ENCODE measurements at regions of chr4 and their contacts with region 1.

Region 1: DNA sequence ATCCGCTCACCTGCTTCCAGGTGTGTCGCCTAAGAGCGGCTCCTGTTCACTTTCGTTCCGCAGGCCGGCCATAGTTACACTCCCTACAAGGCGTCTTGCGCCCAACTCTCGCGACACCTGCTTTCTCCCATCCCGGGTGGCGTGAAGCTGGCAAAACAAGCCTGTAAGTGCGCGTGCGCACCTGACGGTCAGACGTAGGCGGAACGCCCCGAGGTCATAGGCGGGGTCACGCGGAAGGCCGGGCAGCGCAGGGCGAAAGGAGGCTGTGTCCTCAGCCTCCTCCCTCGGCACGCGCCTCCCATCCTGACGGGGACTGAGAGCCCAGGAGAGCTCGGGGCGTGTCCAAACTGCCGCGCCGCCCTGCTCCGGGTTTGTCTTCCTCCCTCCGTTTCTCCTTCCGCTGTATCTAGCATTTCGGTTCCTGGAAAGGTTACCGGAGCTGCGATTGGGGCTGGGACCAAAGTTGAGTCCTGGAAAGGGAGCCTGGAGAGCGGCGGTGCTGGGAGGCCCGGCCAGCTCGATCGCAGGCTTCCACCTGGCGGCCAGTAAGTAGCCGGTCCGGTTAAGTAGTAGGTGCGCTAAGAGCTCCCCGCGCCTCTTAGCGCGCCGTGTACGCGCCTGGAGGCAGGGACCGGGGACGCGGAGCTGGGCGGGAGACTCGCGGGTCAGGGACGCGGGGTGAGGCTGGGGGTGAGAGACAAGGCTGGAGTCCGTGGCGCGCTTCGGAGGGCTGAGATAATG is at the starts of genes ABHD18 and MFSD8:
- DNase-seq: peak; percentile 99
- H3K4me3 ChIP-seq: peak within 1 kb of the TSS; percentile 66
- H3K4me3 Mint-ChIP-seq: peak within 1 kb of the TSS; percentile 97
- H3K27ac Mint-ChIP-seq: peak within 1 kb of the TSS; percentile 97
- H3K4me1 ChIP-seq: peaks cover 4% of the 10 kb centered on the region; the same call in 1 of the 2 replicates
- H3K4me1 Mint-ChIP-seq: no peaks in the 10 kb centered on the region
- H3K27me3 ChIP-seq: no peaks in the 10 kb centered on the region
- H3K27me3 Mint-ChIP-seq: no peaks in the 10 kb centered on the region
- CTCF ChIP-seq: peak; percentile 34 to 44
- total RNA-seq, gene ABHD18: 14.9 and 15.1 TPM in 2 replicates
- total RNA-seq, gene MFSD8: 24.3 and 27.9 TPM in 2 replicates

Region 2: GRCh38 chr4:127417886-127418535 is 547.2 kb before region 1 on chr4:
- CTCF ChIA-PET with region 1: no interaction called
- POLR2A ChIA-PET with region 1: no interaction called
- intact Hi-C with region 1: no loop called
- DNase-seq: no peak
- H3K4me3 ChIP-seq: no peak overlapping the region
- H3K4me3 Mint-ChIP-seq: no peak overlapping the region
- H3K27ac Mint-ChIP-seq: no peak overlapping the region
- H3K4me1 ChIP-seq: no peaks in the 10 kb centered on the region
- H3K4me1 Mint-ChIP-seq: no peaks in the 10 kb centered on the region
- H3K27me3 ChIP-seq: no peaks in the 10 kb centered on the region
- H3K27me3 Mint-ChIP-seq: peaks cover 4% of the 10 kb centered on the region
- CTCF ChIP-seq: no peak

Region 3: GRCh38 chr4:127782274-127783025 is 182.8 kb before region 1 on chr4 and contains the start of gene HSPA4L:
- CTCF ChIA-PET with region 1: interaction called, 3 read pairs
- POLR2A ChIA-PET with region 1: interaction called, 7 read pairs
- intact Hi-C with region 1: loop called (anchors 2 kb)
- DNase-seq: peak; percentile 36 to 37
- H3K4me3 ChIP-seq: peak within 1 kb of the TSS; percentile 59
- H3K4me3 Mint-ChIP-seq: peak within 1 kb of the TSS; percentile 97
- H3K27ac Mint-ChIP-seq: peak within 1 kb of the TSS; percentile 90
- H3K4me1 ChIP-seq: peaks cover 13% of the 10 kb centered on the region; the same call in 1 of the 2 replicates
- H3K4me1 Mint-ChIP-seq: peaks cover 7% of the 10 kb centered on the region
- H3K27me3 ChIP-seq: no peaks in the 10 kb centered on the region
- H3K27me3 Mint-ChIP-seq: peaks cover 3% of the 10 kb centered on the region
- CTCF ChIP-seq: peak in 1 of 2 experiments; percentile 23
- total RNA-seq, gene HSPA4L: 3.3 and 3.6 TPM in 2 replicates

Region 4: GRCh38 chr4:127809173-127809800 is 155.9 kb before region 1 on chr4:
- CTCF ChIA-PET with region 1: interaction called, 3 read pairs
- POLR2A ChIA-PET with region 1: no interaction called
- intact Hi-C with region 1: loop called (anchors 1 kb)
- DNase-seq: peak in 1 of 2 experiments; percentile 3
- H3K4me3 ChIP-seq: no peak overlapping the region
- H3K4me3 Mint-ChIP-seq: no peak overlapping the region
- H3K27ac Mint-ChIP-seq: no peak overlapping the region
- H3K4me1 ChIP-seq: no peaks in the 10 kb centered on the region
- H3K4me1 Mint-ChIP-seq: no peaks in the 10 kb centered on the region
- H3K27me3 ChIP-seq: no peaks in the 10 kb centered on the region
- H3K27me3 Mint-ChIP-seq: no peaks in the 10 kb centered on the region
- CTCF ChIP-seq: peak in 1 of 2 experiments; percentile 20

Region 5: DNA sequence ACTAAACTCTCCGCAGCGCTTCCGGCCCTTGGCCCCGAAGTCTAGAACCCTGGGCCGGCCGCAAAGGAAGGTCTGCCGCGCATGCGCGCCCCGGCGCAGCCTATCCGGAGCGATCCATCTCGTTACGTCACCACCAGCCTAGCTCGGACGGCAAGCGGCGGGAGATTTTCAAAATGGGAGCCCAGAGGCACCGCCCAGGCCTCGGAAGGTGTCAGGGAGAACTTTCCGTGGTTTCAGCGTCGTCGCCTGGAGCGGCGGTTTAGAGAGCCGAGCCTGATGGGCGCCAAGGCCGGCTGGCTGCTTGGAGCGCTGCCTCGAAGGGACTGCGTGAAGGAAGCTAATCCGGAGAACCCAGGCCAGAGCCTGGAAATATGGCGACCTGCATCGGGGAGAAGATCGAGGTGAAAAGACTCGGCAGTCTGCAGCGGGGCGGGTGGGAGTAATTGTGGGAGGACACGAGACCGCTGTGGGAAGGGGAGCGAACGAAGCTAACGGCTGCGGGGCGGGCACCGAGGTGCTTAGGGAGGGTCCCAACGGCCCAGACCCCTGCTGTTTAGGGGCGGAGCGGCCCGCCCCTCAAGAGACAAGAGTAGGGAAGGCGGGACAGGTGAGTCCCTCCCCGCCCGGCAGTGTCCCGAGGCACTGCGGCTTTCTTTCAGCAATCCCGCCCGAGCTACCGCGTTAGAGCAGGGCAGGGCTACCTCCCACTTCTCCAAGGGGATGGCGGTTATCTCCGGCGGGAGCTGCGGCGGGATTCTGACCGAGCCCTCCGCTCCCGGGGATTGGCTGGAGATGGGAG is 84.3 kb before region 1 on chr4 and contains the start of gene PLK4:
- CTCF ChIA-PET with region 1: interaction called, 5 read pairs
- POLR2A ChIA-PET with region 1: interaction called, 24 read pairs
- intact Hi-C with region 1: loop called (anchors 1 kb)
- DNase-seq: peak; percentile 96
- H3K4me3 ChIP-seq: peak within 1 kb of the TSS; percentile 97
- H3K4me3 Mint-ChIP-seq: peak within 1 kb of the TSS; percentile 93
- H3K27ac Mint-ChIP-seq: peak within 1 kb of the TSS; percentile 99
- H3K4me1 ChIP-seq: no peaks in the 10 kb centered on the region; the same call in none of the 2 replicates
- H3K4me1 Mint-ChIP-seq: no peaks in the 10 kb centered on the region
- H3K27me3 ChIP-seq: no peaks in the 10 kb centered on the region
- H3K27me3 Mint-ChIP-seq: no peaks in the 10 kb centered on the region
- CTCF ChIP-seq: no peak
- total RNA-seq, gene PLK4: 28.2 and 31.1 TPM in 2 replicates